Dorsolateral prefrontal cortex (tissue), 120 donors: ENCODE measurements at regions of chr11 and their contacts with region 1.

Region 1: GRCh38 chr11:124673333-124674167 is at the starts of genes SIAE and SPA17:
- DNase-seq: peak; percentile 73 to 93 (median 88)
- H3K4me3 ChIP-seq: peak within 1 kb of the TSS; percentile 57 to 89 (median 74)
- H3K27ac ChIP-seq: peak within 1 kb of the TSS; percentile 33 to 95 (median 89)
- H3K27me3 ChIP-seq: no peaks in the 10 kb centered on the region
- CTCF ChIP-seq: peak in 35 of 56 donors; percentile 7 to 58 (median 30)
- total RNA-seq, gene SIAE: 23.8 to 62.3 (median 44.4) TPM
- total RNA-seq, gene SPA17: 2.0 to 12.4 (median 6.5) TPM

Region 2: GRCh38 chr11:124739479-124740276 is 66.1 kb after region 1 on chr11 and contains the start of gene NRGN:
- intact Hi-C with region 1: loop called (anchors 5 kb)
- DNase-seq: peak; percentile 64 to 93 (median 86)
- H3K4me3 ChIP-seq: peak within 1 kb of the TSS; percentile 43 to 80 (median 67)
- H3K27ac ChIP-seq: peak within 1 kb of the TSS in 58 of 59 donors; percentile 3 to 89 (median 70)
- H3K27me3 ChIP-seq: peaks cover 0 to 43% (median 9%) of the 10 kb centered on the region in 45 donors
- CTCF ChIP-seq: peak in 19 of 56 donors; percentile 7 to 34 (median 18)
- total RNA-seq, gene NRGN: 356 to 2,119 (median 1,378) TPM

Region 3: DNA sequence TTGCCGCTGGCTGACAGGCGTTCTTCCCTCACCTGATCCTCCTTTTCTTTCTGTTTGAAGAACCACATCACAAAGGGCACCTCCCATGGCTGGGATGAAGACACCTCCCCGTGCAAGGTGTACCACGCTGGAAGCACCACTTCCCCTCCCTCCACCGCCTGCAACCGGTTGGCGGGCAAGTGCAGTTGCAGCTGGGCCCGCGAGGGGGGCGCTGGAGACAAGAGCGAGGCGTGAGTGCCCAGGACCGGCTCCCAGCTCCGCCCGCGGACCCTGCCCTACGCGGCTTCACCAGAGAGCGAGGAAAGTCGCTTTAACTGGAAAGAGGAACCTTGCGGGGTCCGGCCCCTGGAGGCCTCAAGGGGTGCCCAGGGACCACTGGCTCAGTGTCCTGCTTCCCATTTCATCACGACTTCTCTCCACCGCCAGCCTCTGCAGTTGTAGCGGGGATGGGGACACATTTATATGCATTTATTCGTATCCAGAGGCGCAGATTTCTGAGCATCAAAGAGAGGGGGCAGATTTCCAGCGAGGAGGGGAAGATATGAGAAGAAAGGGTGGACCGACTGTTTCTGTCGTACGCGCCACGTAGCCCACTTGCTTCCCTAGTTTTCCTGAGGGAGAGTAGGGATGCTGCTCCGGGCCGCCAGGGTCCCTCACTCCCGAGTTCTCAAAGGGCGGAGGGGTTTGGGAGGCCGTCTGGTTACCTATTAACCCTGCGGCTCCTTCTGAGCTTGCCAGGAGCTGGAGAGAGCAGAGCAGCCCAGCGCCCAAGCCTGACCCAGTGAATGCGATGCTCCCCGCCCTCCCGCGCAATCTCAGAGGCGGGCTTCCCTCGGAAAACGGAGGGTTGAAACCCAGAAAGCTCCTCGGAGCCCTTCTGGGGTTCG is 85.0 kb after region 1 on chr11:
- intact Hi-C with region 1: loop called (anchors 2 to 5 kb)
- DNase-seq: peak; percentile 57 to 88 (median 74)
- H3K4me3 ChIP-seq: peak overlapping the region; percentile 19 to 72 (median 53)
- H3K27ac ChIP-seq: peak overlapping the region in 45 of 59 donors; percentile 1 to 89 (median 59)
- H3K27me3 ChIP-seq: peaks cover 0 to 74% (median 28%) of the 10 kb centered on the region in 45 donors
- CTCF ChIP-seq: peak; percentile 14 to 86 (median 72)

Region 4: DNA sequence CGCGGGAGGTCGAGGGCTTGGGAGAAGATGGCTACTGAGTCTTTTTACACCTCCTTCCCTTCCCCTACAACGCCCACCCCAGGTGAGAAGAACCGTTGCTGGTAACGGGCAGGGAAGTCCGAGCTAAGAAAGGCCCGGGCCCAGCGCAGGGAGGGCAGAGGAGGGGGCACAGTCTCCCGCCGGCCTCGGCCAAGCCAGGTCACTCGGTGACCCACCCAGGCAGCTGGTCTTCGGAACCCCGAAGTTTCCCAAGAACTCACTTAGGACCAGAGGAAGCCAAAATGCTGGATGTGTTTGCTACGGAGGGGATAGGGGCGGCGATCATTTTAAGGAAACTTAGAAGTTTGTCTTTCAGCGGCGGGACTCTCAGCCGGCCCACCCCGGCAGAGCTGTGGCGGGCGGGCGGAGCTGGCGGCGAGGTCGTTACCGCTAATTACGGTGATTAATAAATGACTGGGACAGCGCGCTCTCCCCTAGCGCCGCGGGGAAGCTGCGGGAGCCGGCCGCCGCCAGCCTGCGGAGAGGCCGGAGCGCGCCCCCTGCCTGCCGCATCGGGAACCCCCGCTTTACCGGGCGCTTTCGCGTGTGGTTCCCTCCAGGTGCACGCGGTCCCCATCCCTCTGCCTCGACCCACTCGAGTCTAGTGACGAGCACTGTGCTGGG is 192.5 kb after region 1 on chr11:
- intact Hi-C with region 1: loop called in 1 of 2 experiments (anchors 10 kb)
- DNase-seq: peak in 2 of 10 donors; percentile 31 to 68
- H3K4me3 ChIP-seq: peak overlapping the region; percentile 9 to 69 (median 44)
- H3K27ac ChIP-seq: no peak overlapping the region
- H3K27me3 ChIP-seq: peaks cover 6 to 91% (median 65%) of the 10 kb centered on the region in 45 donors
- CTCF ChIP-seq: peak; percentile 47 to 93 (median 84)

Region 5: GRCh38 chr11:125111343-125112207 is 438.0 kb after region 1 on chr11 and contains the start of gene TMEM218:
- intact Hi-C with region 1: no loop called
- DNase-seq: peak; percentile 99 to 100 (median 100)
- H3K4me3 ChIP-seq: peak within 1 kb of the TSS; percentile 50 to 97 (median 86)
- H3K27ac ChIP-seq: peak within 1 kb of the TSS in 57 of 59 donors; percentile 43 to 92 (median 78)
- H3K27me3 ChIP-seq: no peaks in the 10 kb centered on the region
- CTCF ChIP-seq: peak in 14 of 56 donors; percentile 7 to 42 (median 24)
- total RNA-seq, gene TMEM218: 5.4 to 17.7 (median 9.7) TPM

Region 6: GRCh38 chr11:126459691-126460281 is 1786.2 kb after region 1 on chr11:
- intact Hi-C with region 1: no loop called
- DNase-seq: peak in 1 of 10 donors; percentile 54
- H3K4me3 ChIP-seq: peak overlapping the region in 1 of 59 donors; percentile 13
- H3K27ac ChIP-seq: peak overlapping the region in 54 of 59 donors; percentile 9 to 86 (median 68)
- H3K27me3 ChIP-seq: no peaks in the 10 kb centered on the region
- CTCF ChIP-seq: no peak